ENCODE measurements at regions of chr5 and their contacts with region 1.

Region 1: DNA sequence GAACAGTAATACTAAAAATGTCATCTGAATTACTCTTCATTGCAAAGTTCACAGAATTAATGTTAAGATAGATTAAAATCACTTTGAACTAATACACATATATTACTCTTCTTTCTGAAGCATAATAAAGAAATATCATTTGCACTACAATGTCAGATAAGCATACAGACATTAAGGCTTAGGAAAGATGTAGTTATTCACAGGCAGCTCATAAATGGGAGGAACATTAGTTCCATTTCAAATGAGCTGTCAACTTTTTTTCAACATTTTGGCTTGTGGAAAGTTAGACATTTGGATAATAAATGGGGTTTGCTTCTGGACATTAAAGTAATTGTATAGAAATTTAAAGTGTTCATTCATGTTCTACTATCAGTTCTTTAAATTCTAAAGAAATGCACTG is 6.3 kb downstream of the FGF10 start:
- DNase-seq: no peak
- H3K4me3 ChIP-seq: no peak overlapping the region
- H3K27ac ChIP-seq: no peak overlapping the region
- H3K4me1 ChIP-seq: peaks cover 0 to 23% (median 7%) of the 10 kb centered on the region in 4 donors
- H3K27me3 ChIP-seq: no peaks in the 10 kb centered on the region
- CTCF ChIP-seq: no peak
- EP300 ChIP-seq: no peak
- POLR2A ChIP-seq: no peak

Region 2: DNA sequence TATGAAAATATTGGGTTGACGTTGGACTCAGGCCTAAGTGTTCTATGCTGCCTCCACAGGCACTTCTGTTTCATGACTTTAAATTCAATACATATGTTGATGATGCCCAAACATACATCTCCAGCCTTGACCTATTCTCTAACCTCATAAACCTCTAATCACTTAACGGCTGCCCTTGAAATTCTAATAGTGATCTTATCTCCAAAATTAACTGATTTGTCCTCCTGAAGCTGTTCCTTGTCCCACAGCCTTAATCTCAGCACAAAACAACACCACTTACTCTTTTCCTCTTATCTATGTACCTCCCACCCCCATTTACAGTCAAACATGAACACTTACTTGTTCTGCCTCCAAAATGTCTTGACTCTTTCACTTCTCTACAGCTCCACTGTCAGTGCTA is 37.0 kb before region 1 on chr5:
- intact Hi-C with region 1: no loop called
- DNase-seq: no peak
- H3K4me3 ChIP-seq: no peak overlapping the region
- H3K27ac ChIP-seq: no peak overlapping the region
- H3K4me1 ChIP-seq: no peaks in the 10 kb centered on the region
- H3K27me3 ChIP-seq: no peaks in the 10 kb centered on the region
- CTCF ChIP-seq: no peak
- EP300 ChIP-seq: no peak
- POLR2A ChIP-seq: no peak

Region 3: DNA sequence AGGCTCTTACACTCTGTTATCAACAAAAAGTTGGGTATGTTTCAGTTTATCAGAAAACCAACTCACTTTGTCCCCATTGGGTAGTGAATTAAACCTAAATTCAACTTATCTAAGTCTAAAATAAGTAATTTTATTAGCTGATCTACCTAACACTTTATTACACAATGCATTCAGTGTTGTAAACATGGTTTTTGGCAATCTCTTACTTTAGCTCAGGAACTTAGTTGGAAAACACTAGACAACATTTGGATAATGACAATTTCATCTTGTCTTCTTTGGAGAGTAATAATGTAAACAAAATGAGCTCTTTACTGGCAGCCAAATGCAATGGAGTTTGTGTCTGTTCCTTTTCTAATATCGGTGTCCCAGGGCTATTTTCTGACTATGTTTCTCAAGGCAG is 26.7 kb before region 1 on chr5:
- intact Hi-C with region 1: loop called (anchors 2 kb)
- DNase-seq: no peak
- H3K4me3 ChIP-seq: no peak overlapping the region
- H3K27ac ChIP-seq: peak overlapping the region in 3 of 4 donors; percentile 64 to 72 (median 66)
- H3K4me1 ChIP-seq: peaks cover 0 to 57% (median 26%) of the 10 kb centered on the region in 4 donors
- H3K27me3 ChIP-seq: no peaks in the 10 kb centered on the region
- CTCF ChIP-seq: no peak
- EP300 ChIP-seq: no peak
- POLR2A ChIP-seq: no peak

Region 4: GRCh38 chr5:44603525-44604272 is 220.8 kb after region 1 on chr5:
- intact Hi-C with region 1: no loop called
- DNase-seq: no peak
- H3K4me3 ChIP-seq: no peak overlapping the region
- H3K27ac ChIP-seq: no peak overlapping the region
- H3K4me1 ChIP-seq: no peaks in the 10 kb centered on the region
- H3K27me3 ChIP-seq: no peaks in the 10 kb centered on the region
- CTCF ChIP-seq: no peak
- EP300 ChIP-seq: no peak
- POLR2A ChIP-seq: no peak

Measured in sigmoid colon (tissue), 7 donors.